ENCODE measurements at regions of chr11 and their contacts with region 1.

Region 1: DNA sequence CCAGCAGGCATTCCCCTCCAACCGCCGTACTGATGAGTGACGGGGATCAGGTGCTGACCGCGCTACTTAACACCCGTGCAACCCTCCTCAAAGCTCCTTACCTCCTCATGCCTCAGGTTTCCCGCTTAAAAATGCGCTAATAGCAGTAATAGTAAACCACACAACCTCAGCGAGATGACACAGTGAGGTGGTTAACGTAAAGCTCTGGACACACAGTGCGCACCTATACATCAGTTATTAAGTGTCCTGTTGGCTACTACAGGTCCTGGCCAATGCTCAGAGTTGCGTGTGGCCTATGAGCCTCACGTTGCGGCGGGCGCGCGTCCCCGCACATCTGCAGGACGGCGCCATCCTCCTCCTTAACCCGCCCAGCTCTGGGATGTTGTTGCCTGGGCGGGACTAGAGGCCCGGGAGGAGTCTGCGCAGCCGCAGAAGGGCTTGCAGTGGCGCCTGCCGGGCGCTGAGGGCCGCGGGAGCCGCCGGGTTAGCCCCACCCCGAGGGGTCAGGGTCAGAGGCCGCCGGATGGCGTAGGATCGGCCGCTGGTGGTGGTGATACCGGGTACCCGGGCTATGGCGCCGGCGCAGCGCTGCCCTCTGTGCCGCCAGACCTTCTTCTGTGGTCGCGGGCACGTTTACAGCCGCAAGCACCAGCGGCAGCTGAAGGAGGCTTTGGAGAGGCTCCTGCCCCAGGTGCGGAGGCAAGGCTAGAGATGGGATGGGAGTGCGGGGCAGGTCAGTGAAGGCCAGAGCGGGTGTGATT is at the start of gene CENATAC:
- DNase-seq: peak; percentile 92 to 95
- ATAC-seq: peak; percentile 94 to 96
- H3K4me3 ChIP-seq: peak within 1 kb of the TSS; percentile 66 to 88 (median 81)
- H3K27ac ChIP-seq: peak within 1 kb of the TSS; percentile 79 to 96 (median 85)
- H3K4me1 ChIP-seq: peaks cover 24 to 28% of the 10 kb centered on the region in 2 donors
- H3K27me3 ChIP-seq: no peaks in the 10 kb centered on the region
- CTCF ChIP-seq: peak in 1 of 5 experiments; percentile 17
- POLR2A ChIP-seq: peak; percentile 75 to 91
- total RNA-seq, gene CENATAC: 7.4 to 36.4 (median 16.1) TPM

Region 2: GRCh38 chr11:118820412-118821357 is 177.1 kb before region 1 on chr11:
- in situ Hi-C with region 1: no loop called
- intact Hi-C with region 1: no loop called
- DNase-seq: peak; percentile 85 to 92
- ATAC-seq: peak; percentile 99
- H3K4me3 ChIP-seq: no peak overlapping the region
- H3K27ac ChIP-seq: peak overlapping the region; percentile 58 to 83 (median 73)
- H3K4me1 ChIP-seq: peaks cover 7 to 11% of the 10 kb centered on the region in 2 donors
- H3K27me3 ChIP-seq: no peaks in the 10 kb centered on the region
- CTCF ChIP-seq: no peak
- POLR2A ChIP-seq: no peak

Region 3: DNA sequence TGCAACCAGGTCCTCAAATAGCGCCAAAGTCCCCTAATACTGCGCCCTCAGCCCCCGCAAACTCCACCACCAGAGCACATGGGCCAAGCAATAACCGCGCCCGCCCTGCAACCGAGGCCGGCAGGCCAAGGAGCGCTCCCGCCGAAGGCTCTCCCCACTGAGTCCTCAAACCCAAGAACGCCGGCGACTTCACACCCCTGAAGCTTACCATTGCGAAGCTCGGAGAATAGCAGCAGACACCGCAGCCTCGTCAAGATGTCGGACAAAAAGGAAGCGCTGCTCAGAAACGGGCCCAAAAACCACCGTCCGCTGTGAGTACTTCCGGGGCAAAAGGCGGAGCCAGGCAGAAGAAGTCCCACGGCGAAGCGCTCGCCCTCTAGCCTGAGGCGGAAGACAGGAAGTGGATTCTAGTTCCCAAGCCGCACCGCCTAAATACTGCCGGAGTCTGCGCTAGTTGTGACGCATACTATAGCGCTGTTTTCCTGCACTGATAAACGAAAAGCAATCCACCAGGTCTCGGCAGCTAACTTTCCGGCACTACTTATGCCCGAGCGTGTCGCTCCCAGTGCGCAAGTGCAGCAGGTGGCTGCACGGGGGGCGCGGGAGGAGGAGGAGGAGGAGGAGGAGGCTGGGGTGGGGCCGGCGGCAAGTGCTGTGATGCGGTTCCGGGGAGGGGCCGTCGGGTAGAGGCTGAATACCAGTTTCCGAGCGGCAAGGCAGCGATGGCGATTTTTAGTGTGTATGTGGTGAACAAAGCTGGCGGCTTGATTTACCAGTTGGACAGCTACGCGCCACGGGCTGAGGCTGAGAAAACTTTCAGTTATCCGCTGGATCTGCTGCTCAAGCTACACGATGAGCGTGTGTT is 20.5 kb after region 1 on chr11 and contains the starts of genes RPS25 and TRAPPC4:
- in situ Hi-C with region 1: no loop called
- intact Hi-C with region 1: loop called (anchors 1 kb)
- DNase-seq: peak; percentile 94 to 96
- ATAC-seq: peak; percentile 95 to 96
- H3K4me3 ChIP-seq: peak within 1 kb of the TSS; percentile 70 to 99 (median 90)
- H3K27ac ChIP-seq: peak within 1 kb of the TSS; percentile 95 to 98 (median 98)
- H3K4me1 ChIP-seq: peaks cover 38 to 50% of the 10 kb centered on the region in 2 donors
- H3K27me3 ChIP-seq: no peaks in the 10 kb centered on the region
- CTCF ChIP-seq: no peak
- POLR2A ChIP-seq: peak; percentile 85 to 88
- total RNA-seq, gene RPS25: 1,700 to 2,567 (median 1,849) TPM
- total RNA-seq, gene TRAPPC4: 43.0 to 82.8 (median 66.9) TPM

Region 4: DNA sequence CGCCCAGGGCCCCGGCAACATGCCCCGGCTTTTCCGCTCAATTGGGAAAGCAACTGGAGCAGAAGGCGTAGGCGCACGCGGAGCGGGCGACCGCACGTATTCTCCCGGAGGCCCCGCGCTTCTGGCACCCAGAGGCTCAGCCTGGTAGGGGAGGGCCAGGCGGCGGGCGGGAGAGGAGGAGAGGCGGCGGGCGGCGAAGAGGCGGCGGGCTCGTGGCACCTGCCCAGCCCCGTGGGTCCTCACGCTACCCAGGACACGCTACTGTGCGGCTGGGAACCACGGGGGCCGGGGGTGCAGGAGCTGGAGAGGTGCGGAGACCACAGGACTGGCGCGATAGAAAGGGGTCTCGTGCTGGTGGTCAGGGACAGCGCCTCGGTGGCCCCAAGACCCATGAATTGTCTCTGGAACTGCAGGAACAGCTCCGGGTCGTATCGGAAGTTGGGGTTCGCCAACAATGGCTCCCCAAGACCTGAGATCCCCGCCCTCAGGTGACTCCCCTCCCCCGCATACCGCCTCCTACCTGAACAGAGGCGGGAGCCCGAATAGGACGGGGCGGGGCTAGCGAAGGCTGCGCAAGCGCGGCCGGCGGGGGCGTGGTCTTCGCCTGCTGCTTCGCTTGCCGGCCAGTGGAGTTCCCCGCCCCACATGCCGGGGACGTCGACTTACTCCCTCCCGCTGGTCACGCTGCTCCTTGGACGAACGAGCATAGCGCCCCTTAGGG is 32.7 kb after region 1 on chr11 and contains the start of gene SLC37A4:
- in situ Hi-C with region 1: no loop called
- intact Hi-C with region 1: loop called (anchors 1 kb)
- DNase-seq: peak; percentile 98 to 99
- ATAC-seq: peak; percentile 77
- H3K4me3 ChIP-seq: peak within 1 kb of the TSS; percentile 83 to 94 (median 91)
- H3K27ac ChIP-seq: peak within 1 kb of the TSS; percentile 92 to 98 (median 94)
- H3K4me1 ChIP-seq: peaks cover 48 to 50% of the 10 kb centered on the region in 2 donors
- H3K27me3 ChIP-seq: no peaks in the 10 kb centered on the region
- CTCF ChIP-seq: peak; percentile 87 to 92 (median 90)
- POLR2A ChIP-seq: peak; percentile 82 to 85
- total RNA-seq, gene SLC37A4: 29.7 to 72.9 (median 56.4) TPM

Region 5: DNA sequence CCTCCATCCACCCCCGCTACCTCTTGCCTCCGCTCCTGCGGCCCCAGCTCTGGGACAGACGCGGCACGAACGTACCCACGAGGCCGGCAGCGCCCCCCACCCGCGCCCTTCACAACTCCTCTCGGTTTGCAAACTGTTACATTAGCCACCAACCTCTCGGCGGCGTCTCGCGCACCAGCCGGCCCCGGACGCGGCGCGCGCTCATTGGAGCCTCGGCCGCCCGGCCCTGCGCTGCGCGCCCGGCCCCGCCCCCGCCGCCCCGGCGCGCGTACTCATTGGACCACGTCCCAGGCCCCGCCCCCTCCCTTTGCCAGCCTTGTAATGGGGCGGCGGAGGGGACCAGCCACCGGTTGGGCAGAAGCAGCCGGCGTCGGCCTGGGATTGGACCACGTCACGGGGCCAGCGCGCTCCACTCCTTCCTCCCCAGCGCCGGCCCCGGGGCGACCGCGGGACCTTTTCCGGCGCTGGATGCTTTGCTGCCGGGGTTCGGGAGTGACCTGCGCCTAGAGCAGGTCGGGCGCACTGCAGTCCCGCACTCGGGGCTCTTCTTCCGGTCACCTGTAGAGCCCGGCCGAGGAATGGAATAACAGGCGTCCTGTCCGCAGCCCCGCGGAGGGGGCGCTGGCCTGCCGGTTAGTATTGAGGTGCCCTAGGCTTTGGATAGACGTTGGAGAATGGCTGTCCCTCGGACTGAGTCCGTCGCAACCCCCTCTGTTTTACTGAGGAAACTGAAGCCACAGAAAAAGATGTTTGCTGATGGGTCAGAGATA is 59.4 kb after region 1 on chr11 and contains the start of gene HYOU1:
- in situ Hi-C with region 1: no loop called
- intact Hi-C with region 1: loop called (anchors 2 kb)
- DNase-seq: peak; percentile 97
- ATAC-seq: peak; percentile 92 to 93
- H3K4me3 ChIP-seq: peak within 1 kb of the TSS; percentile 73 to 92 (median 80)
- H3K27ac ChIP-seq: peak within 1 kb of the TSS; percentile 83 to 95 (median 88)
- H3K4me1 ChIP-seq: peaks cover 13 to 16% of the 10 kb centered on the region in 2 donors
- H3K27me3 ChIP-seq: no peaks in the 10 kb centered on the region
- CTCF ChIP-seq: peak in 2 of 5 experiments; percentile 19 to 36
- POLR2A ChIP-seq: peak; percentile 94 to 95
- total RNA-seq, gene HYOU1: 18.4 to 29.2 (median 21.9) TPM

Region 6: GRCh38 chr11:119195680-119196079 is 197.9 kb after region 1 on chr11:
- in situ Hi-C with region 1: no loop called
- intact Hi-C with region 1: no loop called
- DNase-seq: no peak
- ATAC-seq: no peak
- H3K4me3 ChIP-seq: no peak overlapping the region
- H3K27ac ChIP-seq: no peak overlapping the region
- H3K4me1 ChIP-seq: no peaks in the 10 kb centered on the region
- H3K27me3 ChIP-seq: no peaks in the 10 kb centered on the region
- CTCF ChIP-seq: no peak
- POLR2A ChIP-seq: no peak

Measured in gastrocnemius medialis (tissue), 4 donors.